Activated naive CD8-positive, alpha-beta T cell treated with anti-CD3 and anti-CD28 coated beads, Interleukin-2, amount 10 ng/mL, durations not matched to agents 7 days and 5 days (primary cell): ENCODE measurements at regions of chr10 and their contacts with region 1.

Region 1: GRCh38 chr10:70493660-70494234 is 15.2 kb downstream of the PALD1 start:
- DNase-seq: no peak
- ATAC-seq: peak; percentile 50
- H3K4me3 Mint-ChIP-seq: peak overlapping the region; percentile 23
- H3K27ac Mint-ChIP-seq: peak overlapping the region; percentile 20
- H3K4me1 Mint-ChIP-seq: peaks cover 34% of the 10 kb centered on the region
- H3K27me3 Mint-ChIP-seq: peaks cover 3% of the 10 kb centered on the region

Region 2: GRCh38 chr10:70480239-70480861 is 13.4 kb before region 1 on chr10:
- POLR2A ChIA-PET with region 1: interaction called, 11 read pairs
- DNase-seq: peak; percentile 54
- ATAC-seq: peak; percentile 53
- H3K4me3 Mint-ChIP-seq: peak overlapping the region; percentile 81
- H3K27ac Mint-ChIP-seq: peak overlapping the region; percentile 26
- H3K4me1 Mint-ChIP-seq: peaks cover 39% of the 10 kb centered on the region
- H3K27me3 Mint-ChIP-seq: peaks cover 22% of the 10 kb centered on the region